RWPE1 (cell line): ENCODE measurements at regions of chr7 and their contacts with region 1.

Region 1: DNA sequence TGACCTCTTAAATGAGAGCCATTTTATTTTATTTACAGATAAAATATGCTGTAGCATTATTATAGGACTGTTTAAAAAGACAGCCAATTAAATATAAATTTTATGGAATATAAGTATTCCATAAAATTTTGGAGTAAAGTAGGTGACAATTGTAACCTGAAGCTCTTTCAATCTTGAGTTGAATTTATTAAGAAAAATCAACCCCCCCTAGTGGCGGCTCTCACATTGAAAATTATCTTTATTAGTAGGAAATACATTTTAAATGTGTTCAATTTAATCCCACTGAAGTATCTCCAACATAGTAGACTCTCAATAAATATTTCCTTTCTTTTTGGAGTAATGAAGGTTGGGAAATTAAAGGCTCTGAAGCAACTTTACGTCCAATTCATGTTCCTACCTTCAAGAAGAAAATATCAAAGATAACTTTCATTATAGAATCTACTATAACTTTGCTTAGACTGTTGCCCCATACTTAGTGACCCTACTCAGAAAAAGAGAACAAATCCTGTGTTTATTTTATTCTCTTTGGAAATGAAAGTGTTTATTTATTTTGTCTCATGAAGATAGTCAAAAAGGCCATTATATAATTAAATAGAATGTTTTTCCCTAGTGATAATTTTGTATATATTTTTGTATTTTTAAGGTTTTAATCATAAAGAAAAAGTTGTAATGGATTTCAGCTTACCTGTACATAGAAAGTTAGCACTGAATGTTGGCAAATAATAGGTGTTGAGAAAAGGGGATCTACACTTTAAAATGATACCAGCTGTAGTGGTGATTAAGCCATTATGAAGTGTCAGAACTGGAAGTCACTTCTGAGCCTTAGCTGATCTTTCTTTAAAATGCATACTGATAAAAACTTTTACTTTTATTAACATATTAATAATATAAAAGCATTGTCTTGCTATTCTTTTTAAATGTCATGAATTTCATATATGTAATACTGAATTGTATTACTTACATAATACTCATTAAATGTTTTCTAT is 3.3 kb downstream of the AHR start:
- DNase-seq: no peak
- H3K27ac ChIP-seq: no peak overlapping the region
- CTCF ChIP-seq: peak; percentile 79

Region 2: DNA sequence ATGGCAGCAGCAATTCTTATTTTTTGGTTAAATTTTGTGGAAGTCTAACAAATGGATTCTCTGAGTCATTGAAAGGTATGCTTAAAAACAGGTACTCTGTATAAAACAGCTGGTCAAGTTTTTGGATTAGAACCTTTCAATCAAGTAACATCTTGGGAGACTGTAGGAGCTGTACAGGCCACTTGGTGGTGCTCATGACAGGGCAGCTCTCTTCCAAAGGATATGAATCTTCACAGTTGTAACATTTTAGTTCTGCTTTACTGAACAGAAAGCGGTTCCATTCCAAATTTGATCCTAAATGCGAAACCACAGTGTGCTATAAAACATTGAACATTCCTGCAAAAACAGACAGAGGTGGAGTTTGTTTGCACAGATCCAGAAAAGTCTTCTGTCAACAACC is 375.5 kb before region 1 on chr7:
- CTCF ChIA-PET with region 1: interaction called, 10 read pairs
- POLR2A ChIA-PET with region 1: no interaction called
- DNase-seq: no peak
- H3K27ac ChIP-seq: no peak overlapping the region
- CTCF ChIP-seq: peak; percentile 74

Region 3: DNA sequence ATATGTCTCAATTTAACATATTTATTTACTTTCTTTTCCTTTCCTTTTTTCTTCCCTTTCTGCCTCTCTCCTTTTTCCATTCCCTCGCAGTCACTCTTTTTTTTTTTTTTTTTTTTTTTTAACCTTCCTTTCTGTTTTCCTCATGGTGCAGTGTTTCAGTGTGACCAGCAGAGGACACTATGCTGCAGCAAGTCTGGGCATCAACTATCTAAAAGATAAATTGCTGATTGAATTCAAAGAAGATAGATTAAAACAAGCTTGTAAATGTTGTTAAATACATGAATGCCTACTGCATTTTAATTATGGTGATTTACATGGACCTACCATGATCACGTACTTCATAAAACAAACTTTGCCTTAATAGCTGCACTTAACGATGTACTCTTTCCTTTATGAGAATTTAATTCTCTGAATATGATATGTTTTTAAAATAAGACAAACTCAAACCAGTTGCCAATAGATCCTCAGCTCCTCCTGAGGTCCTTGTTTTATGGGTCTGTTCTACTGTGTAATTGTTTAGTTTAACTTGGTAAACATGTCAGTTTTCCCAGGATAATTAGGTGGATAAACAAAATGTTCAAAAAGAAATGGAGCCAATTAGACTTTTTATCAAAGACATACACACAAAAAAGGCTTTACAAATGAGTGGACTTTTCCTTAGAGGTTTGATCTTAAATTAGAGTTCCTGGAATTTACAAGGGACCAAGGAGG is 319.0 kb before region 1 on chr7:
- CTCF ChIA-PET with region 1: interaction called, 10 read pairs
- POLR2A ChIA-PET with region 1: no interaction called
- DNase-seq: peak; percentile 29
- H3K27ac ChIP-seq: no peak overlapping the region
- CTCF ChIP-seq: peak; percentile 100

Region 4: GRCh38 chr7:17152721-17153120 is 149.0 kb before region 1 on chr7:
- CTCF ChIA-PET with region 1: no interaction called
- POLR2A ChIA-PET with region 1: no interaction called
- DNase-seq: no peak
- H3K27ac ChIP-seq: no peak overlapping the region
- CTCF ChIP-seq: no peak